ENCODE measurements at regions of chr5 and their contacts with region 1.

Region 1: GRCh38 chr5:129852747-129853352 is 51.4 kb upstream of the CHSY3 start:
- DNase-seq: peak; percentile 87
- ATAC-seq: peak; percentile 85
- H3K4me3 Mint-ChIP-seq: no peak overlapping the region
- H3K27ac Mint-ChIP-seq: no peak overlapping the region
- H3K4me1 Mint-ChIP-seq: no peaks in the 10 kb centered on the region
- H3K27me3 Mint-ChIP-seq: peaks cover 14% of the 10 kb centered on the region

Region 2: GRCh38 chr5:129664337-129664937 is 188.4 kb before region 1 on chr5:
- CTCF ChIA-PET with region 1: no interaction called
- POLR2A ChIA-PET with region 1: no interaction called
- intact Hi-C with region 1: loop called in 1 of 2 experiments (anchors 1 kb)
- DNase-seq: peak; percentile 62
- ATAC-seq: no peak
- H3K4me3 Mint-ChIP-seq: no peak overlapping the region
- H3K27ac Mint-ChIP-seq: no peak overlapping the region
- H3K4me1 Mint-ChIP-seq: no peaks in the 10 kb centered on the region
- H3K27me3 Mint-ChIP-seq: peaks cover 3% of the 10 kb centered on the region

Region 3: GRCh38 chr5:129930221-129930620 is 77.4 kb after region 1 on chr5:
- CTCF ChIA-PET with region 1: no interaction called
- POLR2A ChIA-PET with region 1: no interaction called
- intact Hi-C with region 1: no loop called
- DNase-seq: no peak
- ATAC-seq: no peak
- H3K4me3 Mint-ChIP-seq: no peak overlapping the region
- H3K27ac Mint-ChIP-seq: no peak overlapping the region
- H3K4me1 Mint-ChIP-seq: no peaks in the 10 kb centered on the region
- H3K27me3 Mint-ChIP-seq: peaks cover 4% of the 10 kb centered on the region

Region 4: GRCh38 chr5:130616161-130616560 is 763.3 kb after region 1 on chr5:
- CTCF ChIA-PET with region 1: no interaction called
- POLR2A ChIA-PET with region 1: no interaction called
- intact Hi-C with region 1: no loop called
- DNase-seq: no peak
- ATAC-seq: no peak
- H3K4me3 Mint-ChIP-seq: no peak overlapping the region
- H3K27ac Mint-ChIP-seq: no peak overlapping the region
- H3K4me1 Mint-ChIP-seq: no peaks in the 10 kb centered on the region
- H3K27me3 Mint-ChIP-seq: peaks cover 5% of the 10 kb centered on the region